Aorta (tissue), 5 donors: ENCODE measurements at regions of chr1 and their contacts with region 1.

Region 1: DNA sequence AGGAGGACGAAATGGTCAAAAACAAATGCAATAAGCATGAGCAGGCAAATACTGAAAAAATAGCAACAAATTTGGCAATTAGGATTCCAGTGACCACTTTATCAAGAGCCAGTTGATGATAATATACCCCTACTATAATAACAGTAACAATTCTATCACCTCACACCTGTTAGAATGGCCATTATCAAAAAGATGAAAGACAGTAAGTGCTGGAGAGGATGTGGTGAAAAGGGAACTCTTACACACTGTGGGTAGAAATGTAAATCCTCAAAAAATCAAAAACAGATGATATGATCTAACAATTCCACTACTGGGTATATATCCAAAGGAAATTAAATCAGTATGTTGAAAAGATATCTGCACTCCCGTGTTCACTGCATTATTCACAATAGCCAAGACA is 114.3 kb upstream of the GFI1 start:
- DNase-seq: no peak
- ATAC-seq: no peak
- H3K4me3 ChIP-seq: no peak overlapping the region
- H3K27ac ChIP-seq: no peak overlapping the region
- H3K4me1 ChIP-seq: no peaks in the 10 kb centered on the region
- H3K27me3 ChIP-seq: no peaks in the 10 kb centered on the region

Region 2: DNA sequence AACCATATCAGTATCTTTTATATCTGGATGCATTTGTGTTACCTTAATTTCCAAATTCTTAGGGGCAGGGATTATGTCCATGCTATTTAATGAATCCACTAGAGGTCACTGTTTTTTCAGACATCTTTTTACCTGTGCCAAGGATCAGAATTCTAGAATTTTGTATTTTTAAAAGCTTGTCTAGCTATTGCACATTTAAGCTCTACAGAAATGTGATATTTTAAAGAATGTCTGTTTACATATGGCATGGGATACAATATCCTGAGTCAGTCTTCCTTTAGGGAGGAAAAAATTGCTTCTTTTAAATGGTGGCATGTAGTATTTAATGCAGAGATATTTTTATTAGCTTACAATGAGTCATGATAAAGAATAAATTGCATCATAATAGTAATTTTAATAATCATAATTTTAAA is 290.9 kb before region 1 on chr1:
- intact Hi-C with region 1: loop called in 1 of 2 experiments (anchors 10 kb)
- DNase-seq: no peak
- ATAC-seq: no peak
- H3K4me3 ChIP-seq: no peak overlapping the region
- H3K27ac ChIP-seq: no peak overlapping the region
- H3K4me1 ChIP-seq: no peaks in the 10 kb centered on the region
- H3K27me3 ChIP-seq: no peaks in the 10 kb centered on the region